ENCODE measurements at regions of chr4 and their contacts with region 1.

Region 1: DNA sequence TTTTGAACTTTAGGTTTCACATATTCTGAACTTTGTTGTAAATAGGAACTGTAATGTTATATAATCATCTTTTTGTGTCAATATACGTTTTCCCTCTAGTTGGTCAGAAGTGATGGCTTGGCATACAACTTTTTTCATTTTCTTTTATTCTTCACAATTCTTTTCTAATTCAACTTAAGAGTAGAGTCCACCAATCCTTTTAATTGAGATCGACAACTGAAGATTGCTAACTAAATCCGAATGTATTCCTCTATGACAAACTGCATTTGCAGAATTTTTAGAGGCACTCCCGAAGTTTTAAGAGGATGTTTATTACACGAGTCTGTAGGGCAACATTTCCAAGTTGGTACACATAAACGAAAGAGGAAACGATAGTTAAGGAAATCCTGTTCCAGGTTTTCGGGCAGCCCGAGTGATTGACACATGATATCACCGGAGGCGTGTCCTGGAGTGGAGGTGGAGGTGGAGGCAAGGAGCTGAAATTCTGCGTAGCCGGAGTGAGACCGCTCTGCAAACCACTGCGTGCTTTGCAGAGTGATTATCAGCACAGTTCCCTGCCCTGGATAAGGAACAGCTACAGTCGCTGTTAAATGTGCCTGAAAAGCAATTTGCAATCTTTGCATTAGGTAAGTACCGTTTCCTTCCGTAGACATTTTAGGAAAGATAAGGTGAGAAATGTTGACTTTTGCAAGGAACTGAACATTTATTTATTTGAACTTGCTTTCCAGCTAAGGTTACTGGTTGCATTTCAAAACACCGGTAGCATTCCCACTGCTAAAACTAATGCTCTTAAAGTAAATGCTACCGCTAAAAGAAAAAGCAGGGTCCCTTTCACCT is at the start of gene SPRY1:
- DNase-seq: peak; percentile 76
- H3K4me3 ChIP-seq: peak within 1 kb of the TSS; percentile 74
- H3K27ac ChIP-seq: no peak within 1 kb of the TSS
- H3K4me1 ChIP-seq: peaks cover 36% of the 10 kb centered on the region
- CTCF ChIP-seq: no peak
- total RNA-seq, gene SPRY1: 0.79 and 1.5 TPM in 2 replicates

Region 2: GRCh38 chr4:123127218-123127617 is 269.3 kb before region 1 on chr4:
- CTCF ChIA-PET with region 1: no interaction called
- POLR2A ChIA-PET with region 1: no interaction called
- intact Hi-C with region 1: loop called (anchors 5 kb)
- DNase-seq: peak; percentile 9
- H3K4me3 ChIP-seq: no peak overlapping the region
- H3K27ac ChIP-seq: no peak overlapping the region
- H3K4me1 ChIP-seq: no peaks in the 10 kb centered on the region
- CTCF ChIP-seq: peak; percentile 71

Region 3: GRCh38 chr4:123444290-123444731 is 47.8 kb after region 1 on chr4:
- CTCF ChIA-PET with region 1: no interaction called
- POLR2A ChIA-PET with region 1: no interaction called
- intact Hi-C with region 1: loop called (anchors 2 kb)
- DNase-seq: peak; percentile 91
- H3K4me3 ChIP-seq: peak overlapping the region; percentile 61
- H3K27ac ChIP-seq: peak overlapping the region; percentile 97
- H3K4me1 ChIP-seq: peaks cover 78% of the 10 kb centered on the region
- CTCF ChIP-seq: no peak

Region 4: GRCh38 chr4:123564758-123565346 is 168.3 kb after region 1 on chr4:
- CTCF ChIA-PET with region 1: no interaction called
- POLR2A ChIA-PET with region 1: no interaction called
- intact Hi-C with region 1: loop called (anchors 2 kb)
- DNase-seq: peak; percentile 89
- H3K4me3 ChIP-seq: no peak overlapping the region
- H3K27ac ChIP-seq: no peak overlapping the region
- H3K4me1 ChIP-seq: no peaks in the 10 kb centered on the region
- CTCF ChIP-seq: peak; percentile 100